ENCODE measurements at regions of chr15 and their contacts with region 1.

Region 1: GRCh38 chr15:49383266-49383665 is 39.8 kb upstream of the FGF7 start:
- DNase-seq: no peak
- ATAC-seq: no peak
- H3K4me3 ChIP-seq: no peak overlapping the region
- H3K4me3 Mint-ChIP-seq: no peak overlapping the region
- H3K27ac ChIP-seq: no peak overlapping the region
- H3K27ac Mint-ChIP-seq: no peak overlapping the region
- H3K4me1 ChIP-seq: no peaks in the 10 kb centered on the region
- H3K4me1 Mint-ChIP-seq: no peaks in the 10 kb centered on the region
- H3K27me3 ChIP-seq: no peaks in the 10 kb centered on the region
- H3K27me3 Mint-ChIP-seq: peaks cover 8% of the 10 kb centered on the region
- CTCF ChIP-seq: no peak

Region 2: DNA sequence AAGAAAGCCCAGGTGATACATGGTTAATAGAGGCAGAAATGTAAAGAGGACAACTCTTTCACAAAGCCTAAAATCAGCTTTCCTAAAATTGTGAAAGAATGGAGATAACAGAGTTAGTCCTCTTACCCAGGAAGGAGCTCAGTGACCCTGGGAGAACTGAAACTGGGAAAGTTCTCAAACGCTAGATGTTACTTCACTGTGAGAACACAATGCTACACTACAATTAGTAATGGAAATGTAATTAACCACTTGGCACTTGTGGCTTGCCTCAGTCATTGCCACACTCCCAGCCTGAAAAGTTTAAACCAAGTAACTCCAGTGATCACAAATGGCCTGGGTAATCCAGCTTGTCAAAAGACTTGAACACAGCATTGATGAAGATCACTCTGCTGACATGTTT is 62.9 kb before region 1 on chr15:
- CTCF ChIA-PET with region 1: no interaction called
- POLR2A ChIA-PET with region 1: no interaction called
- intact Hi-C with region 1: loop called (anchors 10 kb)
- DNase-seq: no peak
- ATAC-seq: no peak
- H3K4me3 ChIP-seq: no peak overlapping the region
- H3K4me3 Mint-ChIP-seq: no peak overlapping the region
- H3K27ac ChIP-seq: no peak overlapping the region
- H3K27ac Mint-ChIP-seq: no peak overlapping the region
- H3K4me1 ChIP-seq: no peaks in the 10 kb centered on the region
- H3K4me1 Mint-ChIP-seq: no peaks in the 10 kb centered on the region
- H3K27me3 ChIP-seq: no peaks in the 10 kb centered on the region
- H3K27me3 Mint-ChIP-seq: no peaks in the 10 kb centered on the region
- CTCF ChIP-seq: no peak

Measured in B cell (primary cell).